ENCODE measurements at regions of chr1 and their contacts with region 1.

Region 1: DNA sequence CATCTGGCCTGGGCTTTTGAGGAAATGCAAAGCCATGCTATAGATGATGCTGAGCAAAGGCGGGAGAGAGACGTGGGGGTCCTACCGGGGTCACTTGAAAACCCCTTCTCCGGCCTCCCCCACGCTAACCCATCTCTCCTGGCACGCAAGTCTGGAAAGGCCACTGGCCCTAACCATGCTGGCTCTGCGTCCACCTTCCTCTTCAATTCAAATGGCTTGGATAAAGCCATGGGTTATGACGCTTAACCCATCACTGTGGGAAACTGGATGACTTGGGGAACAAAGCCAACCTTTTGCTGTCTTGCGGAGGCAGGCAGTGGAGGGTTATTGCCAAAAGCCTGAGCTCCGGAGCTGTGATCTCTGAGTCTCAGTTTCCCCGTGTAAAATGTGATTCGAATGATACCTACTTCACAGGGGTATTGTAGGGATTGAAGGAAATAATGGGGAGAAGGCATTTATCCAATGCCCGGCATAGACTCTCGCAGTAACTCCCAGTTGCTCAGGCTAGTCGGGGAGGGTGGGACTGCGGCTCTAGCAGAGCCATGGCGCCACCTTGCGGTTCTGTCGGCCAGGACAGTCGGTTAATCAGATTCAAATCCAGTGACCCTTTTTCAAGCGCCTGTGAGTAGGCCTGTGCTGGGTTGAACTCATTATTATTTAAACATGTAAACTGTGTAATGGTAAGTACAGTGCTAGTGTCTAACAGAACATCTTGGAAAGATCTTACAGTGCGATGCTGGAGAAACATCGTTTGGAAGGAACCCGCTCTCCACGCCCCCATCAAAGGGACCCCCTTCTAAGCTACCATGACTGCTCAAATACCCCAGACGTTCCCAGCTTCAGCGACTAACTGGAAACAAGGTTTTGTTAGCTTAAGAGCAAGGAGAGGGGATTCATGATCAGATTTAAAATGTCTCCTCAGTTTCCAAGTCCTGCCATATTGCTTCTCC is 20.3 kb downstream of the NEK2 start:
- DNase-seq: peak; percentile 80
- H3K4me3 ChIP-seq: no peak overlapping the region
- H3K27ac ChIP-seq: no peak overlapping the region
- H3K4me1 ChIP-seq: no peaks in the 10 kb centered on the region
- CTCF ChIP-seq: peak; percentile 97

Region 2: GRCh38 chr1:210584439-210585113 is 1070.5 kb before region 1 on chr1:
- CTCF ChIA-PET with region 1: no interaction called
- POLR2A ChIA-PET with region 1: no interaction called
- intact Hi-C with region 1: loop called (anchors 10 kb)
- DNase-seq: peak; percentile 53
- H3K4me3 ChIP-seq: no peak overlapping the region
- H3K27ac ChIP-seq: no peak overlapping the region
- H3K4me1 ChIP-seq: no peaks in the 10 kb centered on the region
- CTCF ChIP-seq: peak; percentile 79

Region 3: GRCh38 chr1:211476200-211476849 is 178.8 kb before region 1 on chr1:
- CTCF ChIA-PET with region 1: no interaction called
- POLR2A ChIA-PET with region 1: no interaction called
- intact Hi-C with region 1: loop called (anchors 1 kb)
- DNase-seq: peak; percentile 77
- H3K4me3 ChIP-seq: no peak overlapping the region
- H3K27ac ChIP-seq: no peak overlapping the region
- H3K4me1 ChIP-seq: no peaks in the 10 kb centered on the region
- CTCF ChIP-seq: peak; percentile 99

Region 4: DNA sequence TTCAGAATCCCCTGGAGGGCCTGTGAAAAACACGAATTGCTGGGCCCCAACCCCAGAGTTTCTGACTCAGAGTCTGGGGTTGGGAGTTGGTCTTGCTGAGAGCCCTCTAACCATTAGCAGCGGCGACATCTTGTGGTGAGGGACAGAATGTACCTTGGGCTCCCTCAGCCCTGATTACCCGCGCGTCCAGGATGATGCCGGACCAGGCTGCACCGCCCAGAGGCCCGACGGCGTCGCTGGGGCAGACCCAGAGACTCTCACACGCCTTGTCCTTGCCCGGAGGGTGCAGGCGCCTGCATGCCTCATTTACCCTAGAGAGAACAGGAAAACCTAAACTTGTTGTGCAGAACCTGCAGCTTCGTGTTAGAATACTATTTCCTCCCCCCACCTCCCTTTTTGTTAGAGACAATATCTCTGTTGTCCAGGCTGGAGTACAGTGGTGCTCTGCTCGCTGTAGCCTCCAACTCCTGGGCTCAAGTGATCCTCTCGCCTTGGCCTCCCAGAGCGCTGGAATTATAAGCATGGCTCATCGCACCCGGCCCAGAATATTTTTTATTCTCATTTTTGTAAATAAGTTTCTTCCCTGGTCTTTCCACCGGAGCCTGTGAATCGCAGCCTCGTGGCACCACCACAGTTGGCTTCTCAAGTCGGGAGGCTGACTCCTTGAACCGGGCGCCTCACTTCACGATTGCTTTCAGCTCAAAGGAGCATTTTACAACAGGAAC is 140.9 kb before region 1 on chr1:
- CTCF ChIA-PET with region 1: interaction called, 3 read pairs
- POLR2A ChIA-PET with region 1: no interaction called
- intact Hi-C with region 1: loop called (anchors 1 kb)
- DNase-seq: peak; percentile 84
- H3K4me3 ChIP-seq: peak overlapping the region; percentile 7
- H3K27ac ChIP-seq: no peak overlapping the region
- H3K4me1 ChIP-seq: peaks cover 45% of the 10 kb centered on the region
- CTCF ChIP-seq: peak; percentile 86